CD14-positive monocyte (primary cell): ENCODE measurements at regions of chr1 and their contacts with region 1.

Region 1: DNA sequence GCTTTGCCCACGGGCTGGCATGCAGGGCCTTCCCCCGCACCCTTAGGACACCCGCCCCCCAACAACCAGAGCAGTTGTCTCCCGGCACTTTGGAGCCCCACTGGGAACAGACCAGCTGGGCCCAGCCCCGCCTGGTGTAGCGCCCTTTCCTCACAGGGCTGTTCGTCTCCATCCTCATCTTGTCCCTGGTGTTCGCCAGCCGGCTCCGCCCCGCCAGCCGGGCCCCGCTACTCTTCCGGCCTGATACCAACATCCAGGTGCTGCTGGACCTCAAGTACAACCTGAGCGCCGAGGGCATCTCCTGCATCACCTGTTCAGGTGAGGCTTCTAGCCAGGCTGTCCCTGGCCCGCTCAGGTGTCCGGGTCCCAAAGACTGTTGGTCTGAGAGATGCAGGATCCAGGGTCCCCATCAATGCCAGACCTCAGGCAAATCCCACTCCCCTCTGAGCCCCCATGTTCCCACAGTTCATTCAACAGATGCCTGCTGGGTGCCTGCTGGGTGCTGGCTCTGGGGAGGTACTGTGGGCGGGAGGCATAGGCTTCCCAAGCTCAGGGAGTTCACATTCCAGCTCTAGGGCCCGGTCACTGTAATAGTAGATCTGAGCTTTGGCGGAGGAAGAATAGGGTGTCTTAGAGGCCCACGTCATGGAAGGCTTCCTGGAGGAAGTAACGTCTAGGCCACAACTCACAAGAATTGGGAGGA is 41.7 kb downstream of the DISP3 start:
- DNase-seq: no peak
- H3K4me3 ChIP-seq: no peak overlapping the region
- H3K4me3 Mint-ChIP-seq: no peak overlapping the region
- H3K27ac ChIP-seq: no peak overlapping the region
- H3K27ac Mint-ChIP-seq: no peak overlapping the region
- H3K4me1 ChIP-seq: no peaks in the 10 kb centered on the region
- H3K4me1 Mint-ChIP-seq: no peaks in the 10 kb centered on the region
- H3K27me3 ChIP-seq: no peaks in the 10 kb centered on the region
- H3K27me3 Mint-ChIP-seq: peaks cover 0 to 4% (median 1%) of the 10 kb centered on the region in 3 donors
- CTCF ChIP-seq: no peak

Region 2: DNA sequence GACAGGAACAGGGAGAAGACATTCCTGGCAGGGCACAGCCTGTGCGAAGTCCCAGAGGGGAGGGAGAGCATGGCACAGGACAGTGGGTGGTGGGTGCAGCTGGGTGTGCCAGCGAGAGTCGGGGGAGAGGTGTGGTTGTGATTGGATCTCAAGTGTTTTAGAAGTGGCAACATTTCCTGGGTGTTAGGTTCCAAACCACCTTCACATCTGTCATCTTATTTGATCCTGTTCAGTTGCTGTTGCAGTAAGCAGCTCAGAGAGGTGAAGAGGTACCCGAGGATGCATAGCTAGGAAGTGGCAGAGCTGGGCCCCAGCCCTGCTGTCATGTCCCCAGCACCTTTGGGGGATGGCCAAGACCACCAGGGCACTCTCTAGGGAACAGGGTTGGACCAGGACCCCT is 63.7 kb before region 1 on chr1:
- intact Hi-C with region 1: loop called in 1 of 2 experiments (anchors 2 kb)
- DNase-seq: no peak
- H3K4me3 ChIP-seq: no peak overlapping the region
- H3K4me3 Mint-ChIP-seq: no peak overlapping the region
- H3K27ac ChIP-seq: no peak overlapping the region
- H3K27ac Mint-ChIP-seq: no peak overlapping the region
- H3K4me1 ChIP-seq: no peaks in the 10 kb centered on the region
- H3K4me1 Mint-ChIP-seq: no peaks in the 10 kb centered on the region
- H3K27me3 ChIP-seq: peaks cover 0 to 3% of the 10 kb centered on the region in 2 donors
- H3K27me3 Mint-ChIP-seq: peaks cover 8 to 12% (median 9%) of the 10 kb centered on the region in 3 donors
- CTCF ChIP-seq: no peak